ENCODE measurements at regions of chr3 and their contacts with region 1.

Region 1: GRCh38 chr3:48685602-48686511 is at the start of gene NCKIPSD:
- DNase-seq: peak; percentile 85
- H3K4me3 Mint-ChIP-seq: peak within 1 kb of the TSS; percentile 73
- H3K27ac Mint-ChIP-seq: peak within 1 kb of the TSS; percentile 85
- H3K4me1 Mint-ChIP-seq: peaks cover 31% of the 10 kb centered on the region
- H3K27me3 Mint-ChIP-seq: no peaks in the 10 kb centered on the region
- CTCF ChIP-seq: peak; percentile 63
- total RNA-seq, gene NCKIPSD: 23.8 and 26.9 TPM in 2 replicates

Region 2: GRCh38 chr3:48556793-48557626 is 128.8 kb before region 1 on chr3 and contains the start of gene PFKFB4:
- CTCF ChIA-PET with region 1: interaction called, 12 read pairs
- POLR2A ChIA-PET with region 1: interaction called, 7 read pairs
- intact Hi-C with region 1: loop called (anchors 10 kb)
- DNase-seq: peak; percentile 99
- H3K4me3 Mint-ChIP-seq: peak within 1 kb of the TSS; percentile 74
- H3K27ac Mint-ChIP-seq: peak within 1 kb of the TSS; percentile 47
- H3K4me1 Mint-ChIP-seq: peaks cover 11% of the 10 kb centered on the region
- H3K27me3 Mint-ChIP-seq: no peaks in the 10 kb centered on the region
- CTCF ChIP-seq: no peak
- total RNA-seq, gene PFKFB4: 3.4 and 4.6 TPM in 2 replicates

Region 3: DNA sequence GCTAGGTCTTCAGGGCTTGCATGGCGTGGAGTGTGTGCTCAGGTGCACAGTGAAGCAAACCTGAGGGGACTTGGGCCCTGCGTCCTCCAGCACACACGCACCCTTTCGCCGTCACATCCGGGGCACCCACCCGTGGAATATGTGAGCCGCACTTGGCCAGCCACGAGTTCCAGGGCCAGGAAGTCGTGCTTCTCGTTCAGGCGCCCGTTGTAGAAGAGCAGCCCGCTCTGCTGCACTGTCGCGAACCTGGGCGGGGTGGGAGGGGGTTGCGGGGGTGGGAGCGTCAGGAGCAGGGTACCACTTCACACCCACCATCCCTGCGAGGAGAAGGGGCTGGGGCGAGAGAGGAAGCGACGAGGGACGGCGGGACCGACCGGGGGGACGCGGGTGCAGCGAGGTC is 30.3 kb before region 1 on chr3:
- CTCF ChIA-PET with region 1: no interaction called
- POLR2A ChIA-PET with region 1: no interaction called
- intact Hi-C with region 1: no loop called
- DNase-seq: no peak
- H3K4me3 Mint-ChIP-seq: no peak overlapping the region
- H3K27ac Mint-ChIP-seq: no peak overlapping the region
- H3K4me1 Mint-ChIP-seq: peaks cover 5% of the 10 kb centered on the region
- H3K27me3 Mint-ChIP-seq: no peaks in the 10 kb centered on the region
- CTCF ChIP-seq: no peak

Region 4: GRCh38 chr3:48708481-48708889 is 22.6 kb after region 1 on chr3:
- CTCF ChIA-PET with region 1: interaction called, 11 read pairs
- POLR2A ChIA-PET with region 1: interaction called, 8 read pairs
- intact Hi-C with region 1: no loop called
- DNase-seq: peak; percentile 72
- H3K4me3 Mint-ChIP-seq: peak overlapping the region; percentile 53
- H3K27ac Mint-ChIP-seq: peak overlapping the region; percentile 96
- H3K4me1 Mint-ChIP-seq: peaks cover 21% of the 10 kb centered on the region
- H3K27me3 Mint-ChIP-seq: no peaks in the 10 kb centered on the region
- CTCF ChIP-seq: no peak

Region 5: GRCh38 chr3:48765376-48765775 is 79.5 kb after region 1 on chr3:
- CTCF ChIA-PET with region 1: interaction called, 4 read pairs
- POLR2A ChIA-PET with region 1: no interaction called
- intact Hi-C with region 1: loop called (anchors 5 kb)
- DNase-seq: peak; percentile 36
- H3K4me3 Mint-ChIP-seq: no peak overlapping the region
- H3K27ac Mint-ChIP-seq: no peak overlapping the region
- H3K4me1 Mint-ChIP-seq: no peaks in the 10 kb centered on the region
- H3K27me3 Mint-ChIP-seq: no peaks in the 10 kb centered on the region
- CTCF ChIP-seq: peak; percentile 38

Measured in MCF 10A (cell line).